Naive thymus-derived CD4-positive, alpha-beta T cell (primary cell): ENCODE measurements at regions of chr1 and their contacts with region 1.

Region 1: DNA sequence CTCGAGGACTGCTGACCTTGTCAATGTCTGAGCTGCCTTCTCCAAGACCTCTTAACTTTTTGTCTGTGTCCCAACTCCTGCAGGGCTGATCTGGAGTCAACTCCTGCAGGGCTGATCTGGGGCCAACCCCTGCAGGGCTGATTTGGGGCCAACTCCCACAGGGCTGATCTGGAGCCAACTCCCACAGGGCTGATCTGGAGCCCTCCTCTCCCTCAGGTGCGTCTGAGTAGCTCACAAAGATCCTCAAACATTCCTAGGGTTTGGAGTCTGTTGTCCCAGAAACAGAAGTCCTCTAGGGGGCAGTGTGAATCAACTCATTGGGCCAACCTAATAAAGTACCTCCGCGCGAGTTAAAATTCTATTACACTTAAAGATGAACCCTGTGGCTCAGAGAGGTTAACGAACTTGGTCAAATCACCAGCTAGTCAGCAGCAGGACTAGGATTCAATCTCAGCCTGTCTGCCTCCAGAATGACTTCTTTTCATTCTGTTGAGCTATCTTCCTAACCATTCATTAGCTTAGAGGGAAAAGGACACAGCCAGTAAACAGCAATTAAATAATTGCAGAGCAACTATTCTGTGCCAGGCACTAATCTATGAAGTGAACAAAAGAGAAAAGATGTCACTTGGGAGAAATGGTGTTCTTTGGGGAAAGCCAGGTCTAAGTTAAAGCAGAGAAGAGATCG is 17.2 kb upstream of the RLF start:
- DNase-seq: peak; percentile 19 to 72 (median 57)
- ATAC-seq: peak; percentile 84
- H3K4me3 ChIP-seq: no peak overlapping the region
- H3K4me3 Mint-ChIP-seq: no peak overlapping the region
- H3K27ac ChIP-seq: no peak overlapping the region
- H3K27ac Mint-ChIP-seq: peak overlapping the region in 1 of 9 donors; percentile 5
- H3K4me1 ChIP-seq: no peaks in the 10 kb centered on the region
- H3K4me1 Mint-ChIP-seq: peaks cover 0 to 12% (median 0%) of the 10 kb centered on the region in 7 donors
- H3K27me3 ChIP-seq: no peaks in the 10 kb centered on the region
- H3K27me3 Mint-ChIP-seq: peaks cover 5 to 61% (median 17%) of the 10 kb centered on the region in 5 donors

Region 2: DNA sequence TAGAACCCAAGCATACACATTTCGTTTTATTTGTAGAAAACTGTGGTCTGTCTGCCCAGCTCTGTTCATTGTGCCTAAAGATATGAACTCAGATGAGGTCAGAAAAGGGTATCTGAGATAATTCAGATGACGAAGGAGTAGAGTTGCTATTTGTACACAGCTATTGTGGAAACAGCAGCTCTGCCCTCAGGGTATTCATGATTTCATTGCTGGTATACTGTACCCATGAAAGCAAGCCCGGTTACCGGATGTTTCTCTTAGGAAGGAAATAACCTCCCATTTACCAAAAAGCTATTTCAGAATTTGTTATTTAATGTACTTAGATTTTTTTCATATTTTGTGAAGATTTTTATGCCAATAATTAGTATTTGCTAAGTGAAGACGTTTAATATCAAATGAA is 267.3 kb after region 1 on chr1:
- CTCF ChIA-PET with region 1: interaction called, 10 read pairs
- POLR2A ChIA-PET with region 1: interaction called, 3 read pairs
- intact Hi-C with region 1: no loop called
- DNase-seq: no peak
- ATAC-seq: no peak
- H3K4me3 ChIP-seq: no peak overlapping the region
- H3K4me3 Mint-ChIP-seq: no peak overlapping the region
- H3K27ac ChIP-seq: no peak overlapping the region
- H3K27ac Mint-ChIP-seq: peak overlapping the region in 2 of 9 donors; percentile 24 to 32
- H3K4me1 ChIP-seq: peaks cover 6 to 10% of the 10 kb centered on the region in 2 donors
- H3K4me1 Mint-ChIP-seq: peaks cover 22 to 71% (median 54%) of the 10 kb centered on the region in 7 donors
- H3K27me3 ChIP-seq: no peaks in the 10 kb centered on the region
- H3K27me3 Mint-ChIP-seq: no peaks in the 10 kb centered on the region

Region 3: GRCh38 chr1:40438391-40439015 is 294.5 kb after region 1 on chr1:
- CTCF ChIA-PET with region 1: interaction called, 22 read pairs
- POLR2A ChIA-PET with region 1: no interaction called
- intact Hi-C with region 1: loop called (anchors 1 kb)
- DNase-seq: peak in 5 of 9 donors; percentile 17 to 41 (median 31)
- ATAC-seq: peak; percentile 72
- H3K4me3 ChIP-seq: no peak overlapping the region
- H3K4me3 Mint-ChIP-seq: no peak overlapping the region
- H3K27ac ChIP-seq: no peak overlapping the region
- H3K27ac Mint-ChIP-seq: no peak overlapping the region
- H3K4me1 ChIP-seq: no peaks in the 10 kb centered on the region
- H3K4me1 Mint-ChIP-seq: peaks cover 0 to 5% (median 0%) of the 10 kb centered on the region in 7 donors
- H3K27me3 ChIP-seq: no peaks in the 10 kb centered on the region
- H3K27me3 Mint-ChIP-seq: no peaks in the 10 kb centered on the region

Region 4: DNA sequence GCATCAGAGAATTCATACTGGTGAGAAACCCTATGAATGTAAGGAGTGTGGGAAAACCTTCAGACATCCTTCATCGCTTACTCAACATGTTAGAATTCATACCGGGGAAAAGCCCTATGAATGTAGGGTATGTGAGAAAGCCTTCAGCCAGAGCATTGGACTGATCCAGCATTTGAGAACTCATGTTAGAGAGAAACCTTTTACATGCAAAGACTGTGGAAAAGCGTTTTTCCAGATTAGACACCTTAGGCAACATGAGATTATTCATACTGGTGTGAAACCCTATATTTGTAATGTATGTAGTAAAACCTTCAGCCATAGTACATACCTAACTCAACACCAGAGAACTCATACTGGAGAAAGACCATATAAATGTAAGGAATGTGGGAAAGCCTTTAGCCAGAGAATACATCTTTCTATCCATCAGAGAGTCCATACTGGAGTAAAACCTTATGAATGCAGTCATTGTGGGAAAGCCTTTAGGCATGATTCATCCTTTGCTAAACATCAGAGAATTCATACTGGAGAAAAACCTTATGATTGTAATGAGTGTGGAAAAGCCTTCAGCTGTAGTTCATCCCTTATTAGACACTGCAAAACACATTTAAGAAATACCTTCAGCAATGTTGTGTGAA is 319.0 kb after region 1 on chr1:
- CTCF ChIA-PET with region 1: no interaction called
- POLR2A ChIA-PET with region 1: no interaction called
- intact Hi-C with region 1: no loop called
- DNase-seq: peak in 1 of 9 donors; percentile 9
- ATAC-seq: no peak
- H3K4me3 ChIP-seq: no peak overlapping the region
- H3K4me3 Mint-ChIP-seq: no peak overlapping the region
- H3K27ac ChIP-seq: no peak overlapping the region
- H3K27ac Mint-ChIP-seq: peak overlapping the region in 1 of 9 donors; percentile 42
- H3K4me1 ChIP-seq: no peaks in the 10 kb centered on the region
- H3K4me1 Mint-ChIP-seq: no peaks in the 10 kb centered on the region
- H3K27me3 ChIP-seq: no peaks in the 10 kb centered on the region
- H3K27me3 Mint-ChIP-seq: no peaks in the 10 kb centered on the region

Region 5: DNA sequence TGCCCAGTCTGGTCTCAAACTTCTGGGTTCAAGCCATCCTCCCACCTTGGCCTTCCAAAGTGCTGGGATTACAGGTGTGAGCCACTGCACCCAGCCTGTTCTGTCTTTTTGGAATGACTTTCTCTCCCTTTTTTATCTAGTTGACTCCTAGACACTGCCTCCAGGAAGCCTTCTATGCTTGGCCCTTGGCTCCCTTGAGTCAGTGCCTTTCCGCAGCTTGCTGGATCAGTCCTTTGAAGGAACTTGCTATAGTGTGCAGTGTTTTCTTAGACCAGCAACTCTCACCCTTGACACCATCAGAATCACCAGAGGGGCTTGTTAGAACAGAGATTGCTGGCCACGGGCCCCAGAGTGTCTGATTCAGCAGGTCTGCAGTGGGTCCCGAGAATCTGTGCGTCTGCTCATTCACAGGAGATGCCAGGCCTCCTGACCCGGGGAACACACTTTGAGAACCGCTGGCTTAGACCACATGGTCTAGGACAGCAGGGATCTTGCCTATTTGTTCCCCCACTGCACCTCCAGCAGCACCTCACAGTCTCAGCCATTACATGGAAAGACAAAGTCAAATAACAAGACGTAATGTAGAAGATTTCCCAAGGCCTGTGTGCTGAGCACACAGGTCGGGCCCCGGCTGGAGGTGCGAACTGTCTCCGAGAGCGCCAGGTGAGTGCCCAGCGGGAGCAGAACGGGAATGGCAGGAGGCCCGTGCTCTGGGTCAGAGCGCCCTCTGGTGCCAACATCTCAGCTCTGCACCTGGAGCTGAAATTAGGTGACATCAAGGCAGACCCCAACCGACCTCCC is 808.1 kb after region 1 on chr1:
- CTCF ChIA-PET with region 1: no interaction called
- POLR2A ChIA-PET with region 1: no interaction called
- intact Hi-C with region 1: loop called in 1 of 2 experiments (anchors 5 kb)
- DNase-seq: peak; percentile 24 to 67 (median 39)
- ATAC-seq: peak; percentile 71
- H3K4me3 ChIP-seq: no peak overlapping the region
- H3K4me3 Mint-ChIP-seq: peak overlapping the region in 4 of 10 donors; percentile 18 to 49 (median 28)
- H3K27ac ChIP-seq: no peak overlapping the region
- H3K27ac Mint-ChIP-seq: no peak overlapping the region
- H3K4me1 ChIP-seq: peaks cover 0 to 3% of the 10 kb centered on the region in 2 donors
- H3K4me1 Mint-ChIP-seq: peaks cover 5 to 19% (median 8%) of the 10 kb centered on the region in 7 donors
- H3K27me3 ChIP-seq: no peaks in the 10 kb centered on the region
- H3K27me3 Mint-ChIP-seq: peaks cover 9 to 34% (median 29%) of the 10 kb centered on the region in 5 donors